Aorta (tissue), 5 donors: ENCODE measurements at regions of chr15 and their contacts with region 1.

Region 1: DNA sequence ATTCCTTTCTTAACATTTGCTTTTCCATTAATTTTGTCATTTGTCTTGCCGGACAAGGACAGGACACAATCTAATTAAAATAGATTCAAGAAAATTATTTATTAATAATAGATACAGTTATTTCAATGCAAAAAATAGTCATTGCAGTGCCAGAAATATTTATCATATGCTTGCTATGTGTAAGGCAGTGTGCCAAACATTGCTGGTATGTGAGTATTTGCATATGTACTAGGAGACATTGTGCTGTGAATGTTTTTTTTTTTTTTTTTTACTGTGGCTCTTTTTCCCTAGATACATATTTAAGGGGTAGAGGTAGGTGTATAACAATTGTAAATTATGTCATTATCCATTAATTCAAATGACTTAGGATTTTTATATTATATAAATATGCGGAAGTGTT is 23.3 kb downstream of the SPRED1 start:
- DNase-seq: no peak
- ATAC-seq: no peak
- H3K4me3 ChIP-seq: no peak overlapping the region
- H3K27ac ChIP-seq: no peak overlapping the region
- H3K4me1 ChIP-seq: peaks cover 0 to 4% of the 10 kb centered on the region in 2 donors
- H3K27me3 ChIP-seq: no peaks in the 10 kb centered on the region

Region 2: GRCh38 chr15:38229705-38230310 is 46.2 kb before region 1 on chr15:
- intact Hi-C with region 1: loop called in 1 of 2 experiments (anchors 2 kb)
- DNase-seq: no peak
- ATAC-seq: no peak
- H3K4me3 ChIP-seq: no peak overlapping the region
- H3K27ac ChIP-seq: no peak overlapping the region
- H3K4me1 ChIP-seq: no peaks in the 10 kb centered on the region
- H3K27me3 ChIP-seq: no peaks in the 10 kb centered on the region

Region 3: DNA sequence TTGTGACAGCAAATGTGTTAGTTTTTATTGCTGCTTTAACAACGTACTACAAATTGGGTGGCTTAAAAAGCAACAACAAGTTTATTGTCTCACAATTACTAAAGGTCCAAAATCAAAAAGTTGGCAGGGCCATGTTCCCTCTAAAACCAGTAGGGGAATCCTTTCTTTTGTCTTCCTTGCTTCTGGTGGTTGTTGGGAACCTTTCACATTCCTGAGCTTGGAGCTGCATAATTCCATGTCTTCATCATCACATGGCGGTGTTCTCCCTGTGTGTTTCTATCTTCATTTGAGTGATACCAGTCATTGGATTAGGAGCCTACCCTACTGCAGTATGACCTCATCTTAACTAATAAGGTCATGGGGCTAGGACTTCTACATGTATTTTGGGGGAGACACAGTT is 15.9 kb before region 1 on chr15:
- intact Hi-C with region 1: no loop called
- DNase-seq: no peak
- ATAC-seq: no peak
- H3K4me3 ChIP-seq: no peak overlapping the region
- H3K27ac ChIP-seq: no peak overlapping the region
- H3K4me1 ChIP-seq: no peaks in the 10 kb centered on the region
- H3K27me3 ChIP-seq: no peaks in the 10 kb centered on the region